Heart left ventricle (tissue), 16 donors: ENCODE measurements at regions of chr2 and their contacts with region 1.

Region 1: DNA sequence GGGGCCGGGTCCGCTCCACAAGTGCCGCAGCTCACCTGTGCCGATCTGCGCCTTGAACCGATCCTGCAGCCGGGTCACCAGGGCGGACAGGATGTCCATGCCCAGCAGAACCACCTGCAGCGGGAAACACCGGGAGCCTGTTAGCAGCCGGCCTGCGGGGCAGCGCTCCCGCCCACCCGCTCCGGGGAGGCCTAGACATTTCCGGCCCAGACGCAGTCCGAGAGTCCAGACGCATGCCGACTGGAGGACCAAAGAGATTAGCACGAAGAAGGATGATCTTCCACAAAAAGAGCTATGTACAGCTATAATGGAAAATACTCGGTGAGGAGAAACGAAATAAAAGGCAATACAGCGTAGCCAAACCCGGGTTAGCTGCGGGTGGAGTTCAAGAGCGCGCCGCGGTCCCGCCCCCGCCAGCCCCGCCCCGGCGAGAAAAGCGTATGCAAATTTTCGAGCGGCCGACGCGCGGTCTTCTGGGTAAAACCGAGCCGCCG is 421 bp upstream of the RNU4ATAC start:
- DNase-seq: peak; percentile 82 to 91 (median 86)
- ATAC-seq: peak; percentile 81 to 84 (median 83)
- H3K4me3 ChIP-seq: peak overlapping the region; percentile 64 to 88 (median 73)
- H3K27ac ChIP-seq: peak overlapping the region; percentile 90 to 100 (median 96)
- H3K4me1 ChIP-seq: peaks cover 0 to 80% (median 50%) of the 10 kb centered on the region in 12 donors
- H3K27me3 ChIP-seq: no peaks in the 10 kb centered on the region
- CTCF ChIP-seq: no peak
- POLR2A ChIP-seq: no peak

Region 2: GRCh38 chr2:121459291-121459690 is 71.0 kb before region 1 on chr2:
- intact Hi-C with region 1: no loop called
- DNase-seq: no peak
- ATAC-seq: no peak
- H3K4me3 ChIP-seq: no peak overlapping the region
- H3K27ac ChIP-seq: no peak overlapping the region
- H3K4me1 ChIP-seq: no peaks in the 10 kb centered on the region
- H3K27me3 ChIP-seq: no peaks in the 10 kb centered on the region
- CTCF ChIP-seq: no peak
- POLR2A ChIP-seq: no peak

Region 3: DNA sequence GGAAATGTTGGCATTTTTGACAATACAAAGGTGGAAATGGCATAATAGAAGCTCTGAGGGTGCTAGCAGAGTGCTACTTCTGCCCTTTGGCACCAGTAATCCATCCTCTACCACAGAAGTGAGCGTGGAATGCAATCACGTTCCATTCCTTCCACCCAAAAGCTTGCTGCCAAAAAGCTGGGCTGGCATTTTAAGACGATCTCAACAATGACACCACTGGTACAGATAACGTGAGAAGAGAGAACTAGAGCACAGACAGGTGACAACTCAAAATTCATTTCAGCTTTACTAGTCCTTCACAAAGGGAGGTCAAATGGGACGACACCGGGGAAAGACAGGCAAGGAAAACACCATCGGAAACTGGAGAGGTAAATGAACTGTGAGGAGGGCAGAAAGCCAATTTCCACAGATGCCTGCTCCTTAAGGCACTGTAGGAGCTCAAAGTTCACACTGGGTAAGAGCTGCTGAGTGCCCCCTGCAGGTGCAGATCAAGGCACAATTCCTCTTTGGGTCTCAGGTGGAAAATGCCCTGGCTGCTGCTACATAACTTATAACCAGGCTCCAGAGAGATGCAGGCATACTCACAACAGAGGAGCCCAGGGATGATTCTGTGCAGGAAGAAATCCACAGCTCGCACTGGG is 50.3 kb before region 1 on chr2:
- intact Hi-C with region 1: loop called in 1 of 10 experiments (anchors 5 kb)
- DNase-seq: no peak
- ATAC-seq: peak; percentile 31 to 62 (median 46)
- H3K4me3 ChIP-seq: no peak overlapping the region
- H3K27ac ChIP-seq: peak overlapping the region in 5 of 12 donors; percentile 9 to 38 (median 26)
- H3K4me1 ChIP-seq: peaks cover 0 to 70% (median 43%) of the 10 kb centered on the region in 12 donors
- H3K27me3 ChIP-seq: no peaks in the 10 kb centered on the region
- CTCF ChIP-seq: peak in 3 of 12 donors; percentile 10 to 18 (median 16)
- POLR2A ChIP-seq: no peak

Region 4: DNA sequence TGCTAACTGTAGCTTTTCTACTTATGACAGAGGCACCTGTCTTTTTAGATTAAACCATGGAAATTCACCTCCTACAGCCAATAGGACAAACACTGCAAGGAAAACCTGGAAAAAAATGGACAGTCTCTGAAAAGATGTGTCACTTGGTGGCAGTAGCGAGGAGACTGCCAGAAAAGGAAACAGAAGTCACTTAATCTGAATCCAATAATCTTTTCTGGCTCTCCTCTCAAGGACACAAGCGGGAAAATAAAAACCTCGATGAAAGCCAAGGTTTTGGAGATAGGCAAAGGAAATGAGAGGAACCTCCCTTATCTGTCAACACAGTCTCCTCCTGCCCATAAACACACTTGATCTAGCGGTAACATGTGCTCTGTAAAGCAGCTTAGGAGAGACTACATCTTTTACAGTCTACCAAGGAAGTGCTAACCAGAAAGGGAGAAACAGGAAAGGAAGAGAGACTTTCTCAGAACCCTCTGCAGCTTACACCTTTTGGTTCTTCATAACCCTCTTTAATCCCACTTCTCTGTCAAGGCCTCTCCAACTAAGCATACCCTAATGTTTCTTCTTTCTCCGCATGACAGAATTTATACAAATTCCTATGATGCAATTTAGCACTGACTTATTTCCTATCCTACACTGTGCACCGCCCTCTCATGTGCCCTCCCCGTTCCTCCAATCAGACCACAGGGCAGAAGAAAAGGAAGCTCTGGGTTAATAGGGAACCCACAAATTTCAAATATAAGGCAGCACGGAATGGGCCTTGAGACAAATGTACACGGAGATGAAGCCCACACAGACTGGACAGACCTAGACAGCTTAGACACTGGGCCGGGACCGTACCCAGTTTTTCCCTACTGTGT is 66.2 kb after region 1 on chr2:
- intact Hi-C with region 1: loop called in 5 of 10 experiments (anchors 5 to 10 kb)
- DNase-seq: peak in 1 of 5 donors; percentile 31
- ATAC-seq: peak; percentile 50 to 81 (median 72)
- H3K4me3 ChIP-seq: peak overlapping the region in 8 of 12 donors; percentile 4 to 37 (median 25)
- H3K27ac ChIP-seq: peak overlapping the region; percentile 25 to 82 (median 58)
- H3K4me1 ChIP-seq: peaks cover 0 to 50% (median 27%) of the 10 kb centered on the region in 12 donors
- H3K27me3 ChIP-seq: no peaks in the 10 kb centered on the region
- CTCF ChIP-seq: peak; percentile 25 to 75 (median 56)
- POLR2A ChIP-seq: no peak

Region 5: DNA sequence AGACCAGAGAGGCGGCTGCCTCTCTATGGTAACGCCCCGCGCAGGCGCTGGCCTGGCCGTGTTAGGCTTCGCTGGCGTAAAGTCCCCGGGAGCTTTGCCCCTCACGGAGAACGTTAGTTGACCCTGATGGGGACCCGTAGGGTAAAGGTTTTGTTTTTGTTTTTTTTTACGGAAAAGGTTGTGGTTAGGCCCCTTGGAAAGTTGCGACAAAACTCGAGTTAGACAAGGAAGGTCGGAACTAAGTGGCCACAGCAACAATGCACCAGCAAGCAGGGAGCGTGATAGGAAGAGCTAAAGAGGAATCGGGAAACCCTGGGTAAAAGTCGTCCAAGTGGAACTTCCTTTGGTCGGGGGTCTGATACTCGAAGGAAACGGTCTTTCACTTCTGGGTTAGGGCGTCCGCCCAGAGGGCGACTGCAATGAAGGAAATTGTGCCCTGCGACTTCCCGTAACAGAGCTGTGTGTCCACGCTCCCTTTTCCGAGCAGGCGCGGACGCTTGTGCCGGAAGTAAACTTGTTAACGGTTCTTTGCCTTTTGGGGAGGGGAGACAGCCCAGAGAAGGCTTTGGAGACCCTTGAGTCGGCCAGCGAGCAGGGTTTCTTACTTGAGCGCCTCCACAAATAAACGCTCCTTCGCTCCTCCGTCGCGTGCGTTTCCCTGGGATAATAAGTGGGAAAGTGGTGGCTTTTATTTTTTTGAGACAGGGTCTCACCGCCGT is 119.5 kb after region 1 on chr2:
- intact Hi-C with region 1: loop called (anchors 1 to 5 kb)
- DNase-seq: peak; percentile 97 to 98 (median 98)
- ATAC-seq: peak; percentile 98 to 99 (median 98)
- H3K4me3 ChIP-seq: peak overlapping the region; percentile 70 to 98 (median 86)
- H3K27ac ChIP-seq: peak overlapping the region; percentile 92 to 100 (median 96)
- H3K4me1 ChIP-seq: peaks cover 0 to 62% (median 53%) of the 10 kb centered on the region in 12 donors
- H3K27me3 ChIP-seq: no peaks in the 10 kb centered on the region
- CTCF ChIP-seq: peak in 1 of 12 donors; percentile 4
- POLR2A ChIP-seq: peak in 1 of 2 donors; percentile 41

Region 6: GRCh38 chr2:121722479-121722878 is 192.2 kb after region 1 on chr2:
- intact Hi-C with region 1: loop called (anchors 2 to 10 kb)
- DNase-seq: no peak
- ATAC-seq: peak; percentile 56 to 82 (median 74)
- H3K4me3 ChIP-seq: no peak overlapping the region
- H3K27ac ChIP-seq: peak overlapping the region in 2 of 12 donors; percentile 18 to 26
- H3K4me1 ChIP-seq: peaks cover 0 to 15% (median 0%) of the 10 kb centered on the region in 12 donors
- H3K27me3 ChIP-seq: no peaks in the 10 kb centered on the region
- CTCF ChIP-seq: no peak
- POLR2A ChIP-seq: no peak